ENCODE measurements at regions of chr12 and their contacts with region 1.

Region 1: GRCh38 chr12:116194935-116195431 is 82.5 kb downstream of the MED13L start:
- DNase-seq: peak; percentile 77
- H3K4me3 Mint-ChIP-seq: no peak overlapping the region
- H3K27ac Mint-ChIP-seq: peak overlapping the region; percentile 4
- H3K4me1 Mint-ChIP-seq: peaks cover 57% of the 10 kb centered on the region
- H3K27me3 Mint-ChIP-seq: no peaks in the 10 kb centered on the region

Region 2: DNA sequence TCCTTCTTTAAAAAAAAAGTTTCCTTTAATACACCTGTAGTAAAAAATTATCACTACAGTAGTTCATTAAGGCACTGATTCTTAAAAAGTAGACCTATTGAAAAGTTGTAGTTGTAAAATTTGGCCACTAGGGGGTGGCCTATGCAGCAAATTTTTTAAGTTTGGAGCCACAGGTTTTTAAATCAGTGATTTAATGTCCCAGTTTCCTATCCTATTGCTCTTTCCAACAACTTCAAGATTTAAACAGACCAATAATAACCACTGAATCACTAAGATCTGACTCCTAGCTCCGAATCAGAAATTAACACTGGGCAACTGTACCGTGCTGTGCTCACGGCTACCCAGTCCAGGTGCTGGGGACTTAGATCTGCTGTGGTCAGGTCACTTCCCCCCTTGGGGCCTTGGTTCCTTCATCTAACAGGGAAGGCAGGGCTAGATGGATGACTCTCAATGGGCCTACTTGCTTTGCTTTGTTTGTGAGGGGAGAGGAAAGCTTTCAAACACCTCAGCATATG is 196.8 kb before region 1 on chr12:
- CTCF ChIA-PET with region 1: interaction called, 4 read pairs
- POLR2A ChIA-PET with region 1: no interaction called
- intact Hi-C with region 1: loop called (anchors 5 kb)
- DNase-seq: peak; percentile 13
- H3K4me3 Mint-ChIP-seq: no peak overlapping the region
- H3K27ac Mint-ChIP-seq: no peak overlapping the region
- H3K4me1 Mint-ChIP-seq: peaks cover 4% of the 10 kb centered on the region
- H3K27me3 Mint-ChIP-seq: no peaks in the 10 kb centered on the region

Region 3: GRCh38 chr12:116066381-116067230 is 128.4 kb before region 1 on chr12:
- CTCF ChIA-PET with region 1: no interaction called
- POLR2A ChIA-PET with region 1: no interaction called
- intact Hi-C with region 1: loop called (anchors 2 kb)
- DNase-seq: peak; percentile 71
- H3K4me3 Mint-ChIP-seq: no peak overlapping the region
- H3K27ac Mint-ChIP-seq: no peak overlapping the region
- H3K4me1 Mint-ChIP-seq: peaks cover 34% of the 10 kb centered on the region
- H3K27me3 Mint-ChIP-seq: no peaks in the 10 kb centered on the region